WTC11 (cell line): ENCODE measurements at regions of chr2 and their contacts with region 1.

Region 1: GRCh38 chr2:98269274-98269673 is 77.0 kb upstream of the CNGA3 start:
- DNase-seq: no peak
- ATAC-seq: peak; percentile 86
- H3K4me3 Mint-ChIP-seq: no peak overlapping the region
- H3K27ac Mint-ChIP-seq: no peak overlapping the region
- H3K4me1 Mint-ChIP-seq: no peaks in the 10 kb centered on the region
- H3K27me3 Mint-ChIP-seq: no peaks in the 10 kb centered on the region
- CTCF ChIP-seq: peak; percentile 62

Region 2: GRCh38 chr2:97774425-97774824 is 494.8 kb before region 1 on chr2:
- CTCF ChIA-PET with region 1: interaction called, 14 read pairs
- POLR2A ChIA-PET with region 1: no interaction called
- DNase-seq: peak; percentile 46
- ATAC-seq: peak; percentile 85
- H3K4me3 Mint-ChIP-seq: no peak overlapping the region
- H3K27ac Mint-ChIP-seq: no peak overlapping the region
- H3K4me1 Mint-ChIP-seq: peaks cover 20% of the 10 kb centered on the region
- H3K27me3 Mint-ChIP-seq: peaks cover 11% of the 10 kb centered on the region
- CTCF ChIP-seq: peak; percentile 37; the same call in 1 of the 2 replicates

Region 3: GRCh38 chr2:98123286-98123685 is 146.0 kb before region 1 on chr2:
- CTCF ChIA-PET with region 1: no interaction called
- POLR2A ChIA-PET with region 1: no interaction called
- DNase-seq: no peak
- ATAC-seq: no peak
- H3K4me3 Mint-ChIP-seq: no peak overlapping the region
- H3K27ac Mint-ChIP-seq: no peak overlapping the region
- H3K4me1 Mint-ChIP-seq: no peaks in the 10 kb centered on the region
- H3K27me3 Mint-ChIP-seq: peaks cover 4% of the 10 kb centered on the region; the same call in 1 of the 2 replicates
- CTCF ChIP-seq: no peak

Region 4: DNA sequence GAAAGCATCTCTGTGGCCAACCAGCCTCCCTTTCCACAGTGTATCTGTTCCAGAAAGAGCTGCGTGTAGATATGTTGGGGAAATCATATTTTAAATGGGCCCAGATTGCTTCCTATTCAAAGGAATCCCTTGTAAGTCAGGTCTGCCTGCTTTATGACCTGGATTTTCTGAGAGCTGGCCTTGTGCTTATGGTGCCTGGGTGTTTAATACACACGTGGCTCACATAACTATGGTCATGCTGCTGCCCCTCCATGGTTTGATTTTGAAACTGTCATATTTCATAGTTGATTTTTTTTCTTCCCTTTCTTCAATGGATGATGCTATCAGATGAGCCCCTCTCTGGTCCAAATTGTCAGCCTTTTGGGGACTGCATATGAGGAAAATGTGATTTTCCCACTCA is 34.5 kb before region 1 on chr2:
- CTCF ChIA-PET with region 1: interaction called, 13 read pairs
- POLR2A ChIA-PET with region 1: no interaction called
- DNase-seq: no peak
- ATAC-seq: no peak
- H3K4me3 Mint-ChIP-seq: no peak overlapping the region
- H3K27ac Mint-ChIP-seq: no peak overlapping the region
- H3K4me1 Mint-ChIP-seq: no peaks in the 10 kb centered on the region
- H3K27me3 Mint-ChIP-seq: no peaks in the 10 kb centered on the region
- CTCF ChIP-seq: no peak

Region 5: GRCh38 chr2:98252038-98252773 is 17.1 kb before region 1 on chr2:
- CTCF ChIA-PET with region 1: interaction called, 17 read pairs
- POLR2A ChIA-PET with region 1: interaction called, 3 read pairs
- DNase-seq: no peak
- ATAC-seq: no peak
- H3K4me3 Mint-ChIP-seq: no peak overlapping the region
- H3K27ac Mint-ChIP-seq: no peak overlapping the region
- H3K4me1 Mint-ChIP-seq: no peaks in the 10 kb centered on the region
- H3K27me3 Mint-ChIP-seq: no peaks in the 10 kb centered on the region; the same call in 1 of the 2 replicates
- CTCF ChIP-seq: no peak

Region 6: DNA sequence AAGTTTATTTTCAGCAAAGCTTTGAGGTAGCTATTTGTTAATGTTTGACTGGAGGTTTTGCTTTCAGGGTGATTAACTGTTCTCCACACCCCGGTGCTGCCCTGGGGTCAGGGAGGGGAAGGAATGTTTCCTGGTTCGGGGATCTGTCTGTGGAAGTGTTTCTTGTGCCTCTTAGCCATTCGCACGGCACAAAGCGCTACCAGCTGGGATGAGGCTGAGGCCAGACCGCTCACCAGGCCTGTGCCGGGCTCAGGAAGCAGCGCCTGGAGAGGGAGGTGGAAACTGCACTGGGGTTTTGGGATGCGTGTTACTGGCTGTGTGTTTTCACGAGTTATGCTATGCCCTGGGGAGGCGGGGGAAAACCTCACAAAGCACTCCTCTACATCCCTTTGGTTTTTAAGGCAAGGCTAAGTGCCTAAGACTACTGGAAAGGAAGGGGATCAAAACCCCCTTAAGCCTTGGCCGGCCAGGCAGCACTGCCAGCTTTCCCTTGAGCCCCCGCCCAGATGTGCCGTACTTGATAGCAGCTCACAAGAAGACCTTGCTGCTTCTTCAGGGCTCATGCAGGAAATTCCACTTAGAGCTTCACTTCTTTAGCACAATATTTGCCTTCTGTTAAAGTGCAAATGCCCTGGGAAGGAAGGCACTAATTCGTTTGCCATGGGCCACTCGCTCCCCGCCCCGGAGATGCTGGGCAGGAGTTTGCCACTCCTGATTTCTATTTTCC is 11.3 kb after region 1 on chr2:
- CTCF ChIA-PET with region 1: interaction called, 28 read pairs
- POLR2A ChIA-PET with region 1: no interaction called
- DNase-seq: peak; percentile 30
- ATAC-seq: peak; percentile 79
- H3K4me3 Mint-ChIP-seq: no peak overlapping the region
- H3K27ac Mint-ChIP-seq: no peak overlapping the region
- H3K4me1 Mint-ChIP-seq: peaks cover 32% of the 10 kb centered on the region
- H3K27me3 Mint-ChIP-seq: peaks cover 4% of the 10 kb centered on the region; the same call in 1 of the 2 replicates
- CTCF ChIP-seq: no peak